Common myeloid progenitor, CD34-positive (primary cell): ENCODE measurements at regions of chr2 and their contacts with region 1.

Region 1: GRCh38 chr2:170973492-170974303 is 44.6 kb downstream of the GORASP2 start:
- DNase-seq: peak; percentile 91 to 93 (median 92)
- H3K4me3 ChIP-seq: peak overlapping the region; percentile 40 to 90 (median 75)
- H3K27ac ChIP-seq: peak overlapping the region in 1 of 2 experiments; percentile 68
- H3K4me1 ChIP-seq: peaks cover 0 to 35% (median 23%) of the 10 kb centered on the region in 4 experiments
- H3K27me3 ChIP-seq: peaks cover 0 to 3% (median 0%) of the 10 kb centered on the region in 5 experiments

Region 2: GRCh38 chr2:170950221-170950761 is 23.4 kb before region 1 on chr2:
- CTCF ChIA-PET with region 1: interaction called, 14 read pairs
- POLR2A ChIA-PET with region 1: no interaction called
- DNase-seq: no peak
- H3K4me3 ChIP-seq: no peak overlapping the region
- H3K27ac ChIP-seq: no peak overlapping the region
- H3K4me1 ChIP-seq: no peaks in the 10 kb centered on the region
- H3K27me3 ChIP-seq: no peaks in the 10 kb centered on the region

Region 3: GRCh38 chr2:171018522-171018921 is 44.8 kb after region 1 on chr2:
- CTCF ChIA-PET with region 1: no interaction called
- POLR2A ChIA-PET with region 1: no interaction called
- DNase-seq: no peak
- H3K4me3 ChIP-seq: no peak overlapping the region
- H3K27ac ChIP-seq: no peak overlapping the region
- H3K4me1 ChIP-seq: no peaks in the 10 kb centered on the region
- H3K27me3 ChIP-seq: no peaks in the 10 kb centered on the region

Region 4: GRCh38 chr2:171416009-171416926 is 442.6 kb after region 1 on chr2:
- CTCF ChIA-PET with region 1: interaction called, 12 read pairs
- POLR2A ChIA-PET with region 1: no interaction called
- DNase-seq: peak; percentile 92 to 95 (median 95)
- H3K4me3 ChIP-seq: peak overlapping the region in 1 of 7 experiments; percentile 17
- H3K27ac ChIP-seq: no peak overlapping the region
- H3K4me1 ChIP-seq: peaks cover 0 to 9% (median 3%) of the 10 kb centered on the region in 4 experiments
- H3K27me3 ChIP-seq: no peaks in the 10 kb centered on the region